BJ (cell line): ENCODE measurements at regions of chr6 and their contacts with region 1.

Region 1: DNA sequence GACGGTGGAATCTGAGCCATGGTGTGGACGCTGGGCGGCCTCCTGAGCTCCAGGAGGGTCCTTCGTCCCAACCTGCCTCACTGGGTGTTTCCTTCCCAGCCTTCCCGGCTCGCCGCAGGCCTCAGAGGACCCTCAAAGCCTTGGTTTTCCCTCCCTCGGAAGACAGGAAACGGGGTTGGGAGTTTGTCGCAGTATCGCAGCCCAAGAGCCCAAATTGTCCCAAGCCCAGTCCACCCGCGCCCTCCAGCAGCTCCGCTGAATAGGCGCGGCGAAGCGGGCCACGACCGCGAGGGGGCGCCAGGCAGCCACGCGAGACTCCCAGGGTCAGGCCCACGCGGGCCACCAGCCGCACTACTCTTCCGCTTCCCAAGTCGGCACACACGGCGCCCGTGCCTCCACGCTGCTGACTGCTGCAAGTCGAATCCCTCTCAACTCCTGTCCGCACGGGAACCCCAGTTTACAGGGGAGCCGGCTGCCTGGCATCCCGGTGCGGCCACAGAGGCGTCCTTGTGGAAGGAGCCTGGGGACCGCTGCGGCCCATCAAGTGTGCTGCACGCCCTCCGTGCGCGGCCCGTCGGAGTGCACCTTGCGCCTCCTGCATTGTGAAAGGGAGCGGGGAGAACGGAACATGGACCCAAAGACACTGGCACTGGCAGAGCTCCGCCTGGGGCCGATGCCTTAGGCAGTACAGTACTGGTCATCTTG is 40.4 kb upstream of the HMGA1 start:
- DNase-seq: peak; percentile 3
- H3K4me3 ChIP-seq: peak overlapping the region; percentile 44
- H3K27me3 ChIP-seq: no peaks in the 10 kb centered on the region
- CTCF ChIP-seq: peak; percentile 91

Region 2: DNA sequence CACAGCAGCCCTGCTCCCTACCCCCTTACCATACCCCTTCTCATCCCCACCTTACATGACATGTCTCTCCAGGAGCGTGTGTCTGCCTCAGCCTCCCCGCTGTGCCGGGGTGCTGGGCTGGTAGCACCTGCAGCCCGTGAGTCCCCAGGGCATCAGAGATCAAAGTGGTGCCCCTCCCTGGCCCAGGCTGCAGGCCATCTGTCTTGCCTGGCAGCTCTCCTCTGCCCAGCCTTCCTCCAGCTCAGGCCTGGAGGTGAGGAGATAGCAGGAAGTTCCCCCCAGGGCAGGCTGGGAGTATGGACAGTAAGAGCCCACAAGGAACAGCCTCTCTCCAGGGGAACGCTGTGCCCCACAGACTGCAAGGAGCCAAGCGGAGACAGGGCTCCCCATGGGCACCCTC is 85.7 kb before region 1 on chr6:
- CTCF ChIA-PET with region 1: no interaction called
- POLR2A ChIA-PET with region 1: no interaction called
- DNase-seq: no peak
- H3K4me3 ChIP-seq: no peak overlapping the region
- H3K27me3 ChIP-seq: no peaks in the 10 kb centered on the region; the same call in none of the 2 replicates
- CTCF ChIP-seq: no peak

Region 3: DNA sequence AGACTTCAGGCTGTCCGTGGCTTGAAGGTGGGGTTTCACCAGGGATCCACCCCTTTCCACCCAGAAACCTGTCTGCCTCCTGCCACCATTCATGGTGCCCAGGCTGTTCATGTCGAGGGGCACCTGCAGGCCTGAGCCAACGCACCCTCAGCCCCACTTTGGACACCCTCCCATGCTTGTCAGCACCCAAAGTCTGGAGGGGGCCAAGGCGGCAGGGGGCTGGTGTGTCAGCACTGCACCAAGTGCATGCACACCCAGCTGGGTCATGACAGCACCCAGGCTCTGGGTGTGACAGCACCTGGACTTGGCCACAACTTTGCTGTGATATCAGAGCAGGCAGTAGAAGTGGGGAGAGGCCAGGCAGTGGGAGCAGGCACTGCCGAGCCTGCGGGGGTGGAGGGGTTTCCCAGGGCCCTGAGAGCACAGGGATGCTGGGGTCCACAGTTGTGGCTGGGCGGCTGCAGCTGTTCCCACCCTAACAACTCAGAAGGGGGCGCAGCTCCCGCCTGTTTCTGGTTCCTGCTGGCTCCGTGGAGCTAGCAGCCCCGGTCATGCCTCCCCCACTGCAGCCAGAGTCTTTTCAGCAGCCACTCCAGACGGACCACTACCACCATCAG is 17.1 kb before region 1 on chr6:
- CTCF ChIA-PET with region 1: interaction called, 15 read pairs
- POLR2A ChIA-PET with region 1: no interaction called
- DNase-seq: no peak
- H3K4me3 ChIP-seq: no peak overlapping the region
- H3K27me3 ChIP-seq: peaks cover 7% of the 10 kb centered on the region
- CTCF ChIP-seq: no peak

Region 4: GRCh38 chr6:34248727-34249551 is 52.7 kb after region 1 on chr6 and contains the start of gene SMIM29:
- CTCF ChIA-PET with region 1: interaction called, 11 read pairs
- POLR2A ChIA-PET with region 1: no interaction called
- DNase-seq: no peak
- H3K4me3 ChIP-seq: peak within 1 kb of the TSS; percentile 79
- H3K27me3 ChIP-seq: no peaks in the 10 kb centered on the region
- CTCF ChIP-seq: peak; percentile 67
- polyA plus RNA-seq, gene SMIM29: 16.3 and 29.5 TPM in 2 replicates

Region 5: DNA sequence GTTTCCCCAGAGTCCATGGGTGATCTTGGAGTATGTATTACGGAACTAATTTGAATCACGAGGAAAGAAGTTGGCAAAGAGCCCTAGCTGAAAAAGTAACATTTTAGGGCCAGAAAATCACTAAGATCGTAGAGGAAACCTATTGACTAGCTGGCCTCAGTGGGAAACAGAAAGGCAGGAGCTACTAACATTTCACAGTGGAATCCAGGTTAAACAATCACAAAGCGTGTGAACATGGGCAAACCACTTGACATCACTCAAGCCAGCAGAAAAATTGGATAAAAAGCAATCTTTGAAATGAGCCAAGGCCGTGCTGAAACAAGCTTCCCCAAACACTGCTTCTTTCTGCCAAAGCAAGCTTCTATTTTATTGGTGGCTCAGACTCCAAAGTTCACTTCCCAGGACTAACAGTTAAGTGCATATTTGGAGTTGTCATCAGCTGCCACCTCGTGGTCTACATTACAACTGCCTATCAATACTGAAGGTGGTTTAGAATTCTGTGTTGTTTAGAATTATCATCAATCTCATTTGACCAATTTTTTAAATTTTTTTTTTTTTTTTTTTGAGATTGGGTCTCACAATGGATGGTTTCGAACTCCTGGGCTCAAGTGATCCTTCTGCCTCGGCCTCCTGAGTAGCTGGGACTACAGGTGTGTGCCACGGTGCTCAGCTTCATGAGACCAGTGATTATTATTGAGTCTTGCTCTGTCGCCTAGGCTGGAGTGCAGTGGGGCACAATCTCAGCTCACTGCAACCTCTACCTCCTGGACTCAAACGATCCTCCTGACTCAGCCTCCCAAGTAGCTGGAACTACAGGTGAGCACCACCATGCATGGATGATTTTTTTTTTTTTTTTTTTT is 219.0 kb after region 1 on chr6:
- CTCF ChIA-PET with region 1: interaction called, 36 read pairs
- POLR2A ChIA-PET with region 1: no interaction called
- DNase-seq: no peak
- H3K4me3 ChIP-seq: no peak overlapping the region
- H3K27me3 ChIP-seq: no peaks in the 10 kb centered on the region
- CTCF ChIP-seq: peak; percentile 44

Region 6: GRCh38 chr6:34610819-34611477 is 414.7 kb after region 1 on chr6:
- CTCF ChIA-PET with region 1: interaction called, 28 read pairs
- POLR2A ChIA-PET with region 1: no interaction called
- DNase-seq: peak; percentile 9
- H3K4me3 ChIP-seq: no peak overlapping the region
- H3K27me3 ChIP-seq: no peaks in the 10 kb centered on the region
- CTCF ChIP-seq: no peak